ENCODE measurements at regions of chr21 and their contacts with region 1.

Region 1: DNA sequence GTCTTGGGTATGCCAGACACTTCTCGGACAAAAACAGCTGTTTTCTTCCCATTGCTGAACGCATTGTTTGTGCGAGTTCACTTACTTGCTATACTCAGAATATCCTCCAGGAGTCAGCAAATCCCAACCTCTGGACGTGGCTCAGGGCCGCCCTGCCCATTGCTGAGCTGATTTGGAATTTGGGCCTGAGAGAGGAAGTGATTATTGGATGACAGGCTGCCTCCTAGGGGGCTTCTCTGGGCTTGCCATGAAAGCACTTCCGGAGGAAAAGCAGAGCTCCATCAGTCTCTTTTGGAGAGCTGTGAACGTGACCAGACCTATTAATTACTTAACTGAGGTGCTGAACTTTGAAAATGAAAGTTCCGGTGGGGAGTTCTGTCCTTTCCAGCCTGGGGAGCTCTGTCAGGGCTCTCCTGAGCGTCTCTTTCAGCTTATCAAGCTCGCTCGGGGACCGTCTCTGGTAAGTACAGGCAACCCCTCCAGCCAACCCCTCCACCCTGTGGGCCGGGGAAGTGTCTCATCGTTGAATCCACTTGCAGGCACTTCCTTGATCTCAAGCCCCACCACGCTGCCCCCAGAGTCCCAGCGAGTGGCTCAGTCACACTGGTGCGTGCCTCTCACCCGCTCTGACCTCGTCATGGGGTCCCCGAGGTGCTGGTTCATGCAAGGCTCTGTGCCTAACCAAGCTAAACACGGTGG is 76.9 kb downstream of the CLIC6 start:
- DNase-seq: peak; percentile 65
- H3K4me3 ChIP-seq: no peak overlapping the region
- H3K27ac ChIP-seq: no peak overlapping the region
- H3K4me1 ChIP-seq: peaks cover 0 to 8% (median 2%) of the 10 kb centered on the region in 4 donors
- H3K27me3 ChIP-seq: no peaks in the 10 kb centered on the region
- CTCF ChIP-seq: peak; percentile 83 to 93 (median 86)
- EP300 ChIP-seq: no peak
- POLR2A ChIP-seq: no peak

Region 2: GRCh38 chr21:34559089-34559631 is 186.5 kb before region 1 on chr21:
- in situ Hi-C with region 1: no loop called
- intact Hi-C with region 1: no loop called
- DNase-seq: no peak
- H3K4me3 ChIP-seq: no peak overlapping the region
- H3K27ac ChIP-seq: no peak overlapping the region
- H3K4me1 ChIP-seq: peaks cover 0 to 3% (median 0%) of the 10 kb centered on the region in 4 donors
- H3K27me3 ChIP-seq: no peaks in the 10 kb centered on the region
- CTCF ChIP-seq: no peak
- EP300 ChIP-seq: no peak
- POLR2A ChIP-seq: no peak

Region 3: DNA sequence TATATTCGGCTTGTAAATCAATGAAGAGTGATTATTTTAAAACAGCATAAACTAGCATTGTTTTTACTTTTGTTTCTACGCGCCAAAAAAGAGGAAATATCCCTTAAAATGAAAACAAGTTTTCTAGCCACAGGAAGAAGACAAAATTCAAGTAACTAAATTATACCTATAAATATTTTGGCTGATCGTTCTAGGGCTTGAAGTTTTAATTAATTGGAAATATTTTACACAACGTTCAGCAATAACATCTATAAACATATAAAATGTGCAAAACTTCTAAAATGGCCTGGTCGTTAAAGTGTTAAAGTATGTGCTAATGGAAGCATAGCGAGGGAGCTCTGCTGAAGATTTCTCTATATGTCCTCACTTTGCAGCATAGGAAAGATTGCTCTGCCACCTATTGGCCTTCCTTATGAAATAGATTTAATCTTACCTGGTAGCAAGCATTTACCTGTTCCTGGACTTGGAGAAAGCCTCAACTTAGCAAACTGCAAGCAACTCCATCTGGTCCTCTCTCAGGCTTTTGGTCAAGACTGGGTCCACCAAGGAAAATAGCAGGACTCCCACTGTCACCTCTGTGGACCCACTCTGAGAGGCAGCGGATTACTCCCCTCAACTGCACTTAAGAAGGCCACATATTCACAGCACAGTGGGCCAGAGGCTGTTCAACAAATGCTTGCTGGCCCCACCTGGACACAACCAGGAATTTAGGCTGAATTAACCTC is 654.7 kb after region 1 on chr21:
- in situ Hi-C with region 1: loop called in 3 of 4 experiments (anchors 25 kb)
- intact Hi-C with region 1: no loop called
- DNase-seq: peak; percentile 32
- H3K4me3 ChIP-seq: no peak overlapping the region
- H3K27ac ChIP-seq: no peak overlapping the region
- H3K4me1 ChIP-seq: peaks cover 0 to 7% (median 0%) of the 10 kb centered on the region in 4 donors
- H3K27me3 ChIP-seq: no peaks in the 10 kb centered on the region
- CTCF ChIP-seq: peak; percentile 51 to 78 (median 55)
- EP300 ChIP-seq: no peak
- POLR2A ChIP-seq: no peak

Region 4: DNA sequence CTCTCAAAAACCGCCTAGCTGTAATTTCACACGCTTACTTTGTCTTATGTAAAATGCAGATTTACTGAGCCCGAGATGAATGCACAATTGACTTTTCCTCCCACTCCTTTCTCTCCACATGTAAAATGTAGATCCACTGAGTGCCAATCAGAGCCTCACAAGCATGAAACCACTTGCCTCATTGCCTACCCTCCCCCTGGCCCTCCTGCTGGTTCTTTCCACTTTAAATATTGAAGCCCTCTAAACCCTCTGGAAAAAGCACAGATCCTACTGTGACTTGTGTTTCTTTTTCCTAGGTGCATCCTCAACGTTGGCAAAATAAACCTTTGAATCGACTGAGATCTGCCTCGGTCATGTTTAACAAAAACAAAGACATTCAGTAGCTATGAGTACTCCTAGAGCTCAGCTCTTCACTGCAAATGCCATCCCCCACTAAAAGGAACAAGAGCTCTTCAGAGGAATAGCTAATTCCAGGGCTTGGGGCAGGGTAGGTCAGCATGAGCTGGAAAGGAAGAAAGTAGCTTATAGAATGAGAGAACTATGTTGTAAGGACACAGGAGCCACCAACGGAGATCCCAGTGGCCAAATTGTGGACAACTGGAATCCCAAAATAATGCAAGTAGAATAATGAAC is 668.9 kb after region 1 on chr21:
- in situ Hi-C with region 1: loop called in 3 of 4 experiments (anchors 25 kb)
- intact Hi-C with region 1: loop called (anchors 10 kb)
- DNase-seq: no peak
- H3K4me3 ChIP-seq: no peak overlapping the region
- H3K27ac ChIP-seq: no peak overlapping the region
- H3K4me1 ChIP-seq: no peaks in the 10 kb centered on the region
- H3K27me3 ChIP-seq: no peaks in the 10 kb centered on the region
- CTCF ChIP-seq: no peak
- EP300 ChIP-seq: no peak
- POLR2A ChIP-seq: no peak

Region 5: DNA sequence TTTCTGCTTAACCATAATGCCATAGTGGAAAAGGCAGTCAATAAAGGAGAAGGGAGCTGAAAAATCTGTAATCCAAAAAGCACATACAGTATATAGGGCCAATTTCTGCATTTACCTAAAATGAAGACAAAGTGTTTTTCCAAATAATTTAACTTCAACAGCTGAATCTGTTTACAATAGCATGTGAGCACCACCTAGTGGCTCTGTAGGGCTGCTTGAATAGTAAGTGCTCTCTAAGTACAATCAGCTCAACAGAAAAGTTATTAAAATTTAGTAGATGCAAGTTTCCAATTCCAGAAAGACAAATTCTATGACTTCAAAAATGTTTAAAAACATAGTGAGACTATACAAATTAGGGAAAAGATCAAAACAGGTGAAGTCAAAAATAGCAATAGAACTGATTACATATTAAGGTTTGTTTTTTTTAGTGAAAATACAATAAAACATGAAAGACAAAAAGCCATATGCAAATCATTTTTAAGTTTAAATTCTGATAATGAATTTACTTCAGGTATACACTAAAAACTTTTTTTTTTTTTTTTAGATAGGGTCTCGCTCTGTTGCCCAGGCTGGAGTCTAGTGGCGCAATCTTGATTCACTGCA is 1094.6 kb after region 1 on chr21:
- in situ Hi-C with region 1: loop called (anchors 25 kb)
- intact Hi-C with region 1: loop called (anchors 10 kb)
- DNase-seq: peak; percentile 52
- H3K4me3 ChIP-seq: no peak overlapping the region
- H3K27ac ChIP-seq: no peak overlapping the region
- H3K4me1 ChIP-seq: no peaks in the 10 kb centered on the region
- H3K27me3 ChIP-seq: no peaks in the 10 kb centered on the region
- CTCF ChIP-seq: peak; percentile 67 to 78 (median 74)
- EP300 ChIP-seq: no peak
- POLR2A ChIP-seq: no peak

Region 6: GRCh38 chr21:36028127-36029069 is 1282.7 kb after region 1 on chr21:
- in situ Hi-C with region 1: no loop called
- intact Hi-C with region 1: loop called (anchors 5 kb)
- DNase-seq: peak; percentile 77
- H3K4me3 ChIP-seq: no peak overlapping the region
- H3K27ac ChIP-seq: no peak overlapping the region
- H3K4me1 ChIP-seq: peaks cover 0 to 3% (median 0%) of the 10 kb centered on the region in 4 donors
- H3K27me3 ChIP-seq: no peaks in the 10 kb centered on the region
- CTCF ChIP-seq: peak; percentile 82 to 96 (median 94)
- EP300 ChIP-seq: no peak
- POLR2A ChIP-seq: no peak